AG04450 (cell line): ENCODE measurements at regions of chr17 and their contacts with region 1.

Region 1: GRCh38 chr17:41548844-41549595 is 20.9 kb upstream of the KRT19 start:
- DNase-seq: peak; percentile 77
- H3K4me3 ChIP-seq: no peak overlapping the region
- H3K27ac ChIP-seq: peak overlapping the region; percentile 85
- H3K27me3 ChIP-seq: no peaks in the 10 kb centered on the region
- CTCF ChIP-seq: peak; percentile 86

Region 2: GRCh38 chr17:40825599-40825998 is 723.4 kb before region 1 on chr17:
- CTCF ChIA-PET with region 1: interaction called, 14 read pairs
- POLR2A ChIA-PET with region 1: no interaction called
- DNase-seq: no peak
- H3K4me3 ChIP-seq: no peak overlapping the region
- H3K27ac ChIP-seq: no peak overlapping the region
- H3K27me3 ChIP-seq: no peaks in the 10 kb centered on the region
- CTCF ChIP-seq: no peak

Region 3: DNA sequence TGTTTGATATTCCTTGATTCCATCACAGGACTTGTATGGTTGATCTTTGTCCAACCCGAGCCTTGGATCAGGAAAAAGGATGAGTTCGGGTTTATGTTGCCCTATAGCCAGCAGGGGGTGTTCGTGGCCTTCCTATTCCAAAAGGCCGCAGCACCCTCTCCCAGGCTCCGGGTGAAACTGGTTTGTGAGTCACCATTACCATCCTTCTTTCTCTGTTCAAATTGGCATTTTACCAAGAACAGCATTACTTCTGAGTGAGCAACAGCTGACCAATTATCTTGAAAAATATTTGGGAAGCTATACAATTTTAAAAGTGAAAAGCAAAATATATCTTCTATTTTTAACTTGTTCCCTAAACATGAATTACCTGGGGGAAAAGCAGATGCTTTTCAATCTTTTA is 639.7 kb before region 1 on chr17:
- CTCF ChIA-PET with region 1: interaction called, 93 read pairs
- POLR2A ChIA-PET with region 1: interaction called, 5 read pairs
- DNase-seq: peak; percentile 92
- H3K4me3 ChIP-seq: no peak overlapping the region
- H3K27ac ChIP-seq: peak overlapping the region; percentile 89
- H3K27me3 ChIP-seq: no peaks in the 10 kb centered on the region
- CTCF ChIP-seq: peak; percentile 85

Region 4: DNA sequence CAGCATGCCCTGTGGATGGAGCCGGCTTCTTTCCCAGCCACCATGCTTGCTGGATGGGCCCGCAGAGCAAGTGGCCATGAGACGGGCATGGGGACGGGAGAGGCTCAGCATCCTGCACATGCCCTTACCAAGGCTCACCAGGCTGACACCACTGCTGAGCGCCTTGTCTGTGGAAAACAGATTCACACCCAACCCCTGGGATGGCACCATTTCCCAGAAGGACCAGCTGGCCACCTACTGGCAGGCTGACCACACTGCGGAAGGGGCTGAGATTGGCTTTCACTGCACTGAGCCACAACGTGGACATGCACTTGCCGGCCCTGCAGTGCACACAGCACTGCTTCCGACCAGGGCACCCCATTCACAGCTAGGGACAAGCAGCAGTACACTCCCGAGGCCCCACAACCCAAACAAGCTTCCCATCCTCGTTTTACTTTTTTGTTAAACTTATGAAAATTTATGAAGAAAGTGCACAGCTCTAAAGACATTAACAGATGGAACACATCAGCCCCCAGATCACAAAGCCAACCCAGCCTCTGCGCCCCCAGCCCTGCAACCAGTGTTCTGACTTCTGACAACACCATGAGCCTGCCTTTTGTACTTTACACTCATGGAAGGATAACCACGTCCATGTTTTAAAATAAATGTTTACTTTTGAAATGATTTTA is 219.6 kb before region 1 on chr17:
- CTCF ChIA-PET with region 1: interaction called, 17 read pairs
- POLR2A ChIA-PET with region 1: no interaction called
- DNase-seq: no peak
- H3K4me3 ChIP-seq: no peak overlapping the region
- H3K27ac ChIP-seq: no peak overlapping the region
- H3K27me3 ChIP-seq: no peaks in the 10 kb centered on the region
- CTCF ChIP-seq: peak; percentile 94

Region 5: DNA sequence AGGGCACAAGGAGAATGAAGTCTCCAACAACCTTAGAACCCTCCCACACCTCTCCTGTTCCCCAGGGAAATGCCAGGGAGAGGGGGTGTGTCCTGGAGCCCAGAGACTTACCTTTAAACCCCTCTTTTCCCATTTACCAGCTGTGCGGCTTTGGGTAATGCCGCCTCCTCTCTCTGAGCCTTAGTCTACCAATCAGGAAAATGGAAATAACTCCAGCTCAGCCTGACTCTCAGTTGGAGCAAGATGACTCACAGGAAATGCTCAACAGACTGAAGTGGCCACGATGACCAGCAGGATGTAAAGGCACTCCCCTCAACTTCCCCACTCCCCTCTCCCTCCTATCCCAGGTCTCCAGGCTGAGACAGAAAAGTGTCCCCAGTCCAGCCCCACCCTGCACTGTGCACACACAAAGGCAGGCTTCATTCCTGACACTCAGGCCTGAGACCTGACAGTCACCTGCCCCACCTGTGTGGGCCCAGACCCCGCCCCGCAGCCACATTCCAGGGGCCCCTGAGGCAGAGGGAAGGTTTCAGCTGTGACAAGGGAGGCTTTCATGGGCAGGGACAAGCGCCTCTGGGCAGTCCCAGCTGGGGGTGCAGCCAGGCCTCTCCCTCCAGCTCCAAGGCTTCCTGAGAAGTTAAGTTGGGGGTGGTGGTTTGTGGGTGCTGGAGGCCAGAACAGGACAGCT is 27.3 kb before region 1 on chr17:
- CTCF ChIA-PET with region 1: interaction called, 20 read pairs
- POLR2A ChIA-PET with region 1: no interaction called
- DNase-seq: peak; percentile 50
- H3K4me3 ChIP-seq: no peak overlapping the region
- H3K27ac ChIP-seq: peak overlapping the region; percentile 39
- H3K27me3 ChIP-seq: no peaks in the 10 kb centered on the region
- CTCF ChIP-seq: no peak; the same call in 1 of the 2 replicates

Region 6: GRCh38 chr17:41559548-41559947 is 10.5 kb after region 1 on chr17:
- CTCF ChIA-PET with region 1: interaction called, 55 read pairs
- POLR2A ChIA-PET with region 1: no interaction called
- DNase-seq: no peak
- H3K4me3 ChIP-seq: no peak overlapping the region
- H3K27ac ChIP-seq: no peak overlapping the region
- H3K27me3 ChIP-seq: peaks cover 42% of the 10 kb centered on the region
- CTCF ChIP-seq: no peak

Region 7: DNA sequence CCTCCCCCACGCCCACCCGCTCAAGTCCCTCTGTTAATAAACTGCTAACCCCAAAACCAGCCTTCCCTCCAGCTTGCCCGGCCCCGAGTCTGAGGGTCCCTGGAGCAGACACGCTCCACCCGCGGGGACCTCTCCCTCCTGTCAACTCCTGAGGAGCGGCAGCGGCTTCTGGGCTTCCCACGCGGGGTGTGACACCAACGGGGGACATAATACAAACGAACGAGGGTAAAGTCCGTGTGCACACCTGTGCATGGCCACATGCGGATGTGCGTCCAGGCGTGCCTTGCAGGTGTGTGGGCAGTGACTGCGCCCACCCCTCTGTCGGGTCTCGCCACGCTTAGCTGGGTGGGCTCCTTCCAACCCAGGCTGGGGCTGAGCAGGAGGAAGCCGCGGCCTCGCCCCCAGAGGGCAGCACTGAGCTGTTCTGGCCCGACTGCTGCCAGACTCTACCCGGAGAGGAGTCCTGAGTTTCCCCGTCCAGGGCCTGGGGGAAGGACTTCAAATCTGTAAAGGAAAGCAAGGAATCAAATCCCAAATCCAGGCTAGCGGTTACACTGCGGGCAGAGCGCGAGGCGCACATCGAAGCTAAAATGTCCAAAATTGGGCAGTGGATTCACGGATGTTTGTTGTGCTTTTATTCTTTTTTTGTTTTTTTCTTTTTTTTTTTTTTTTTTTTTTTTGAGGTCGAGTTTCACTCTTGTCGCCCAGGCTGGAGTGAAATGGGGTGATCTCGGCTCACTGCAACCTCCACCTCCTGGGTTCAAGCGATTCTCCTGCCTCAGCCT is 99.6 kb after region 1 on chr17:
- CTCF ChIA-PET with region 1: interaction called, 251 read pairs
- POLR2A ChIA-PET with region 1: no interaction called
- DNase-seq: peak; percentile 61
- H3K4me3 ChIP-seq: peak overlapping the region; percentile 55
- H3K27ac ChIP-seq: peak overlapping the region; percentile 47
- H3K27me3 ChIP-seq: peaks cover 3% of the 10 kb centered on the region
- CTCF ChIP-seq: peak; percentile 93